CD8-positive, alpha-beta T cell (primary cell): ENCODE measurements at regions of chr4 and their contacts with region 1.

Region 1: DNA sequence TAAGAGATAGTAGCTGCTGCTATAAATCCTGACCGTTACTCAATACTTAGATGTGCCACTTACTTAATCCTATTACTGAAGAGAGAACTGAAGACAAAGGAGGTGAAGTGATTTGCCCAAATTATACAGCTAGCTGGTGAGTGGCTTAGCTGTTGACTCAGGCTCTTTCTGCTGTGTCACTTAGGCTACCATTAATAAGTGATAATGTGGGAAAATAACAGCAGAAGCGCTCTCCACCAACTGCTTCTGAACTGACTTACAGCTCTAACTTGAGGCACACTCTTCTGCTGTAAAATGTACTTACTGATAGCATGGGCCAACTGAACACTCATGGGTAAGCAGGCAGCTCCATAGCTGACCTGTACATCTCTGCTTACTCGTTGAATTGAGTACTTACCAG is 7.5 kb upstream of the KLHL5 start:
- DNase-seq: no peak
- ATAC-seq: no peak
- H3K4me3 ChIP-seq: no peak overlapping the region
- H3K4me3 Mint-ChIP-seq: no peak overlapping the region
- H3K27ac ChIP-seq: no peak overlapping the region
- H3K27ac Mint-ChIP-seq: no peak overlapping the region
- H3K4me1 ChIP-seq: no peaks in the 10 kb centered on the region
- H3K4me1 Mint-ChIP-seq: peaks cover 17% of the 10 kb centered on the region
- H3K27me3 ChIP-seq: no peaks in the 10 kb centered on the region
- H3K27me3 Mint-ChIP-seq: no peaks in the 10 kb centered on the region
- CTCF ChIP-seq: no peak

Region 2: GRCh38 chr4:37682701-37683401 is 1371.6 kb before region 1 on chr4:
- CTCF ChIA-PET with region 1: no interaction called
- POLR2A ChIA-PET with region 1: no interaction called
- intact Hi-C with region 1: no loop called
- DNase-seq: peak in 2 of 9 experiments; percentile 17 to 47
- ATAC-seq: no peak
- H3K4me3 ChIP-seq: no peak overlapping the region
- H3K4me3 Mint-ChIP-seq: peak overlapping the region; percentile 65
- H3K27ac ChIP-seq: peak overlapping the region in 1 of 2 experiments; percentile 40
- H3K27ac Mint-ChIP-seq: peak overlapping the region; percentile 70
- H3K4me1 ChIP-seq: peaks cover 30% of the 10 kb centered on the region
- H3K4me1 Mint-ChIP-seq: peaks cover 58% of the 10 kb centered on the region
- H3K27me3 ChIP-seq: no peaks in the 10 kb centered on the region
- H3K27me3 Mint-ChIP-seq: no peaks in the 10 kb centered on the region
- CTCF ChIP-seq: no peak

Region 3: DNA sequence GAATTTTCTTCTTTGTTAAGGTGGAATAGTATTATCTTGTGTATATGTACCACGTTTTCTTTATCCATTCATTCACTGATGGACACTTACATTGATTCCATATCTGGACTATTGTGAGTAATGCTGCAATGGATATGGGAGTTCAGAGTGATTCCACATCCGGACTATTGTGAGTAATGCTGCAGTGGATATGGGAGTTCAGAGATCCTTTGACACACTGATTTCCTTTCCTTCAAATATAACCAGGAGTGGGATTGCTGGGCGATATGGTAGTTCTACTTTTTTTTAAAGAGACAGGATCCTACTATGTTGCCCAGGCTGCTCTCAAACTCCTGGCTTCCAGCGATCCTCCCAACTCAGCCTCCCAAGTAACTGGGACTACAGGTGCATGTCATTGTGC is 34.4 kb before region 1 on chr4:
- CTCF ChIA-PET with region 1: no interaction called
- POLR2A ChIA-PET with region 1: no interaction called
- intact Hi-C with region 1: loop called in 1 of 2 experiments (anchors 5 kb)
- DNase-seq: no peak
- ATAC-seq: no peak
- H3K4me3 ChIP-seq: no peak overlapping the region
- H3K4me3 Mint-ChIP-seq: no peak overlapping the region
- H3K27ac ChIP-seq: no peak overlapping the region
- H3K27ac Mint-ChIP-seq: no peak overlapping the region
- H3K4me1 ChIP-seq: no peaks in the 10 kb centered on the region
- H3K4me1 Mint-ChIP-seq: peaks cover 3% of the 10 kb centered on the region
- H3K27me3 ChIP-seq: no peaks in the 10 kb centered on the region
- H3K27me3 Mint-ChIP-seq: no peaks in the 10 kb centered on the region
- CTCF ChIP-seq: no peak

Region 4: GRCh38 chr4:39085891-39086290 is 31.4 kb after region 1 on chr4:
- CTCF ChIA-PET with region 1: interaction called, 3 read pairs
- POLR2A ChIA-PET with region 1: no interaction called
- intact Hi-C with region 1: loop called in 1 of 2 experiments (anchors 5 kb)
- DNase-seq: no peak
- ATAC-seq: no peak
- H3K4me3 ChIP-seq: no peak overlapping the region
- H3K4me3 Mint-ChIP-seq: no peak overlapping the region
- H3K27ac ChIP-seq: no peak overlapping the region
- H3K27ac Mint-ChIP-seq: no peak overlapping the region
- H3K4me1 ChIP-seq: no peaks in the 10 kb centered on the region
- H3K4me1 Mint-ChIP-seq: no peaks in the 10 kb centered on the region
- H3K27me3 ChIP-seq: no peaks in the 10 kb centered on the region
- H3K27me3 Mint-ChIP-seq: no peaks in the 10 kb centered on the region
- CTCF ChIP-seq: no peak

Region 5: GRCh38 chr4:39263895-39264294 is 209.4 kb after region 1 on chr4:
- CTCF ChIA-PET with region 1: no interaction called
- POLR2A ChIA-PET with region 1: no interaction called
- intact Hi-C with region 1: no loop called
- DNase-seq: no peak
- ATAC-seq: no peak
- H3K4me3 ChIP-seq: no peak overlapping the region
- H3K4me3 Mint-ChIP-seq: no peak overlapping the region
- H3K27ac ChIP-seq: no peak overlapping the region
- H3K27ac Mint-ChIP-seq: no peak overlapping the region
- H3K4me1 ChIP-seq: no peaks in the 10 kb centered on the region
- H3K4me1 Mint-ChIP-seq: no peaks in the 10 kb centered on the region
- H3K27me3 ChIP-seq: no peaks in the 10 kb centered on the region
- H3K27me3 Mint-ChIP-seq: no peaks in the 10 kb centered on the region
- CTCF ChIP-seq: no peak